ENCODE measurements at regions of chr15 and their contacts with region 1.

Region 1: GRCh38 chr15:75201609-75202250 is at the start of gene C15orf39:
- DNase-seq: peak; percentile 85 to 88
- ATAC-seq: peak; percentile 58 to 80 (median 67)
- H3K4me3 ChIP-seq: peak within 1 kb of the TSS; percentile 59
- H3K4me3 Mint-ChIP-seq: peak within 1 kb of the TSS; percentile 93
- H3K27ac ChIP-seq: peak within 1 kb of the TSS; percentile 74
- H3K27ac Mint-ChIP-seq: peak within 1 kb of the TSS; percentile 88 to 93
- H3K4me1 ChIP-seq: peaks cover 67% of the 10 kb centered on the region
- H3K4me1 Mint-ChIP-seq: peaks cover 46 to 76% of the 10 kb centered on the region in 2 donors
- H3K27me3 ChIP-seq: no peaks in the 10 kb centered on the region
- H3K27me3 Mint-ChIP-seq: no peaks in the 10 kb centered on the region
- CTCF ChIP-seq: peak; percentile 99
- total RNA-seq, gene C15orf39: 63.5 to 89.2 (median 70.1) TPM

Region 2: GRCh38 chr15:74635228-74635627 is 566.5 kb before region 1 on chr15:
- intact Hi-C with region 1: loop called (anchors 10 kb)
- DNase-seq: peak; percentile 60 to 88
- ATAC-seq: peak; percentile 82 to 93 (median 83)
- H3K4me3 ChIP-seq: no peak overlapping the region
- H3K4me3 Mint-ChIP-seq: no peak overlapping the region
- H3K27ac ChIP-seq: no peak overlapping the region
- H3K27ac Mint-ChIP-seq: peak overlapping the region in 1 of 2 donors; percentile 2
- H3K4me1 ChIP-seq: peaks cover under 1% of the 10 kb centered on the region
- H3K4me1 Mint-ChIP-seq: peaks cover 6 to 10% of the 10 kb centered on the region in 2 donors
- H3K27me3 ChIP-seq: no peaks in the 10 kb centered on the region
- H3K27me3 Mint-ChIP-seq: no peaks in the 10 kb centered on the region
- CTCF ChIP-seq: peak; percentile 95

Region 3: GRCh38 chr15:74842581-74843444 is 358.9 kb before region 1 on chr15 and contains the start of gene ULK3:
- intact Hi-C with region 1: loop called (anchors 10 kb)
- DNase-seq: peak; percentile 93 to 95
- ATAC-seq: peak; percentile 92 to 98 (median 93)
- H3K4me3 ChIP-seq: peak within 1 kb of the TSS; percentile 90
- H3K4me3 Mint-ChIP-seq: peak within 1 kb of the TSS; percentile 91
- H3K27ac ChIP-seq: peak within 1 kb of the TSS; percentile 80
- H3K27ac Mint-ChIP-seq: peak within 1 kb of the TSS; percentile 91
- H3K4me1 ChIP-seq: peaks cover 48% of the 10 kb centered on the region
- H3K4me1 Mint-ChIP-seq: peaks cover 18 to 49% of the 10 kb centered on the region in 2 donors
- H3K27me3 ChIP-seq: no peaks in the 10 kb centered on the region
- H3K27me3 Mint-ChIP-seq: no peaks in the 10 kb centered on the region
- CTCF ChIP-seq: peak; percentile 70
- total RNA-seq, gene ULK3: 54.8 to 75.1 (median 64.7) TPM

Region 4: GRCh38 chr15:75029378-75030022 is 172.2 kb before region 1 on chr15:
- intact Hi-C with region 1: loop called (anchors 1 kb)
- DNase-seq: peak; percentile 89 to 92
- ATAC-seq: peak; percentile 90 to 99 (median 98)
- H3K4me3 ChIP-seq: no peak overlapping the region
- H3K4me3 Mint-ChIP-seq: no peak overlapping the region
- H3K27ac ChIP-seq: no peak overlapping the region
- H3K27ac Mint-ChIP-seq: peak overlapping the region in 1 of 2 donors; percentile 39
- H3K4me1 ChIP-seq: peaks cover 31% of the 10 kb centered on the region
- H3K4me1 Mint-ChIP-seq: peaks cover 12 to 17% of the 10 kb centered on the region in 2 donors
- H3K27me3 ChIP-seq: no peaks in the 10 kb centered on the region
- H3K27me3 Mint-ChIP-seq: no peaks in the 10 kb centered on the region
- CTCF ChIP-seq: peak; percentile 92

Region 5: GRCh38 chr15:75107908-75108838 is 93.6 kb before region 1 on chr15:
- intact Hi-C with region 1: loop called (anchors 2 kb)
- DNase-seq: peak; percentile 67 to 77
- ATAC-seq: peak; percentile 85 to 97 (median 91)
- H3K4me3 ChIP-seq: no peak overlapping the region
- H3K4me3 Mint-ChIP-seq: peak overlapping the region; percentile 76
- H3K27ac ChIP-seq: peak overlapping the region; percentile 55
- H3K27ac Mint-ChIP-seq: peak overlapping the region; percentile 81 to 94
- H3K4me1 ChIP-seq: peaks cover 55% of the 10 kb centered on the region
- H3K4me1 Mint-ChIP-seq: peaks cover 45 to 61% of the 10 kb centered on the region in 2 donors
- H3K27me3 ChIP-seq: no peaks in the 10 kb centered on the region
- H3K27me3 Mint-ChIP-seq: no peaks in the 10 kb centered on the region
- CTCF ChIP-seq: no peak

Measured in natural killer cell (primary cell).